HEK293T (cell line): ENCODE measurements at regions of chr22 and their contacts with region 1.

Region 1: DNA sequence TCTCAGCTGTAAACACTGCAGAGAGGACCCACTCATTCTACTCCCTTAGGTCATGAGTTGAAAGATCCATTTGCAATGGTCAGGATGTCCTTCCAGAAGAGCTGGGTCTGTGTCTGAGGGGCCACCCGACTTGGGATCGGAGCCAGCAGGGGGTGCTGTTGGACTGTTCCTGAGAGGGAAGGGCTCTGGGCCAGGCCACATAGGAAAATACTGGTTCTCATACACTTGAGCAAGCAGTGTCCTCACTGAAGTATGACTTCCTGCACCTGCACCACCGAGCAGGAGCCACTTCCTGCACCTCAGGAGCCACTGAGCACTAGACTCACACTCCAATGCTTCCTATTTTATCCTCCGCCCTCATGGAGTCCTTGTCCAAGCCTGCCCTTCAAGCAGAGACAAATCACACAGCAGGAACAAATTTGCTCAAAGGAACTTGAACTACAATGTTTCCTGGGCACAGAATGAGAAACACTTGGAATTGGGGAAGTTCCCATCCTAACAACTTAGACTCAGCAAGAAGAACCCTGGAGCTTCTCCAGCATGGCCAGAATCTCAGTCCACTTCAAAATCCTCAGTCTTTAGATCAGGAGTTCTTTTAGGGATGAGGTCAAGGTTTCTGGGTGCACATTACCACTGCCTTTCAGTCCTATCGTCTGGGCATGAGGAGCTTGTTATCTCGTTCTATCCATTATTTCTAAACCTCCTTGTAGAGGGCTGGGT is 36.6 kb upstream of the VPREB1 start:
- DNase-seq: peak; percentile 87

Region 2: DNA sequence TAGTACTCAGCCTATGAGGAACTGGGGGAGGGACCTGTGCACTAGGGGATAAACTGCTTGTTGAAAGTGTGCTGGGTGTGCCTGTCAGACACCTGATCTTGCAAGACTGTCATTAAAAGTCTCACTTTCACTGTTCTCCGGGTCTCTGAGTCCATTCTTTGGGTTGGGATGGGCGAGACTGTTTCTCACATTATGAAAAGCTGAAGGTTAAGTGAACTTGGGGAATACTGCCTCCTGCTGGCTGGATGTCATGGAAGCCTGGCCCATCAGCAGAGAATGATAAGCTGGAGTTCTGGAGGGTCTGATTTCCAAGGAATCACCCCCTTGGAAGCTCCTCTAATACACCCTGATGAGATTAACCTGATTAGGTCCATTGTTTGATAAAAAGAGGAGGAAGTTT is 27.6 kb after region 1 on chr22:
- CTCF ChIA-PET with region 1: interaction called, 13 read pairs
- POLR2A ChIA-PET with region 1: no interaction called
- DNase-seq: peak; percentile 45